MCF 10A (cell line): ENCODE measurements at regions of chr11 and their contacts with region 1.

Region 1: DNA sequence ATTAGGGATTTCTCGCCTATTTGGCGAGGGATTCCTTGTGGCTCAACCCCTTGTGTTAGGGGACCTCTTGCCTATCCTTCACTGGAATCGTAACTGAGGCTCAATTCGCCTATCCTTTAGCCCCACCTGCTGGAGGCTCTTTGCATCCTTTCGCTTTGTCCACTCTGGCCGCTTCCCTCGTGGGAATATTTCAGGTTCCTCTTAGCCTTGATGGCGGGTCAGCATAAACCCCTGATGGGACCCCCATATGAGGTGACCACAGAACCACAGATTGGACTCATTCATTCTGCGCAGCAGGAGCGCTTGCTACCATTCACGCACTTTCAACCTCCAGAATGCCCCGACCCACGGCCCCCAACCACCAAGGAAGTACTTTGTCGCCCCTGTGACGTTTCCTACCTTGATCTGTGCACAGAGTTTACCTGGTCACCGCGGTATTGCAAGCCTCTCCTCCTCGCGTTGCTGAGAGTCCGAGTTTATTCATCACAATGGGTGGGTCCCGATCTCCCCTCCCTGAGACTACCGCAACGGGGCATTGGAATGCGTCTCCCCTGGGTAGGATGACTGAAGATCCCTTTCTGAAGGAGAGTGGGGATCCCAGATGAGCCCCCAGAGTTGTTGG is at the start of gene OR52N2:
- DNase-seq: peak; percentile 74
- H3K4me3 Mint-ChIP-seq: peak within 1 kb of the TSS; percentile 74
- H3K27ac Mint-ChIP-seq: no peak within 1 kb of the TSS
- H3K4me1 Mint-ChIP-seq: peaks cover 13% of the 10 kb centered on the region
- H3K27me3 Mint-ChIP-seq: peaks cover 79% of the 10 kb centered on the region
- CTCF ChIP-seq: peak; percentile 72
- total RNA-seq, gene OR52N2: not detected in 2 replicates

Region 2: DNA sequence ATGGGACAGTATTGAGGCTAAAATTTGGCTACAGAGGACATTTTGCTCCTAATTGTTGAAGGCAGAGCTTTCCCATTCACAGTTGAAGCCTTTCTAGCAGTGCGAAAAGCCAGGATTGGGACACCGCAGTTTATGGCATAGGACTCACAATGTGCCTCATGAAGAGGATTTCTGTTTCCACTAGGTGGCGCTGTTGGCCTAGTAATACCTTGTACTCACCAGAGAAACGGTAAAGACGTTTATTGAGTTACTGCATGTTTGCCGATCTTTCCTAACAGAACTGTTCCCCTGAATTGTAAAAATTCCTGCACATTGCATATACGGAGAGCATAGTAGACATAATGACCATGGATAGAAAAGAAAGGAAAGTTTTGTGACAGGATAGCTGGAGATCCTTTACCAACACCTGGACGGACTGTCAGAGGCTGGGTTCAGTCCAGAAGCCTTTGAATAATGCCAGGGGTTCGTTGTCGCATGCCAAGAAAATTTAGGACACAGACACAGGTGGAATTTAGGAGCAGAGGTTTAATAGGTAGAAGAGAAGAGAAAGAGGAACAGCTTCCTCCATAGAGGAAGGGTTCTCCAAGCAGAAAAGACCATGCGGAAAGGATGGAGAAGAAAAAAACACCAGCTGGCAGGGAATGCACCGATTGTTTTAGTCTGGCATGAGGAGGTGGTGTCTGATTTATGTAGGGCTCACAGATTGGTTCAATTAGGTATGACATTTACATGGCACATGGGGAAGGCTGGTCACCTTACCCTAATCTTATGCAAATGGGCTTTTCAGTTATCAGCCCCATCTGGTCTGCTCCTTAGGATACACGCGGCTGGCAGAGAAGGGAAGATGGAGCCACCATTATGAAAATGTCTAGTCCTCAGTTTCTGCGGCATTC is 1182.2 kb before region 1 on chr11:
- CTCF ChIA-PET with region 1: no interaction called
- POLR2A ChIA-PET with region 1: no interaction called
- intact Hi-C with region 1: loop called (anchors 5 kb)
- DNase-seq: peak; percentile 88
- H3K4me3 Mint-ChIP-seq: no peak overlapping the region
- H3K27ac Mint-ChIP-seq: no peak overlapping the region
- H3K4me1 Mint-ChIP-seq: no peaks in the 10 kb centered on the region
- H3K27me3 Mint-ChIP-seq: peaks cover 45% of the 10 kb centered on the region
- CTCF ChIP-seq: peak; percentile 73

Region 3: GRCh38 chr11:5204787-5205186 is 603.8 kb before region 1 on chr11:
- CTCF ChIA-PET with region 1: interaction called, 4 read pairs
- POLR2A ChIA-PET with region 1: no interaction called
- intact Hi-C with region 1: loop called (anchors 2 kb)
- DNase-seq: peak; percentile 63
- H3K4me3 Mint-ChIP-seq: no peak overlapping the region
- H3K27ac Mint-ChIP-seq: no peak overlapping the region
- H3K4me1 Mint-ChIP-seq: peaks cover 5% of the 10 kb centered on the region
- H3K27me3 Mint-ChIP-seq: peaks cover 39% of the 10 kb centered on the region
- CTCF ChIP-seq: peak; percentile 58

Region 4: GRCh38 chr11:5380740-5381342 is 427.8 kb before region 1 on chr11:
- CTCF ChIA-PET with region 1: interaction called, 3 read pairs
- POLR2A ChIA-PET with region 1: no interaction called
- intact Hi-C with region 1: loop called (anchors 1 kb)
- DNase-seq: peak; percentile 74
- H3K4me3 Mint-ChIP-seq: no peak overlapping the region
- H3K27ac Mint-ChIP-seq: no peak overlapping the region
- H3K4me1 Mint-ChIP-seq: no peaks in the 10 kb centered on the region
- H3K27me3 Mint-ChIP-seq: peaks cover 23% of the 10 kb centered on the region
- CTCF ChIP-seq: peak; percentile 78

Region 5: GRCh38 chr11:5605849-5606248 is 202.8 kb before region 1 on chr11:
- CTCF ChIA-PET with region 1: interaction called, 4 read pairs
- POLR2A ChIA-PET with region 1: no interaction called
- intact Hi-C with region 1: loop called (anchors 1 kb)
- DNase-seq: peak; percentile 87
- H3K4me3 Mint-ChIP-seq: no peak overlapping the region
- H3K27ac Mint-ChIP-seq: no peak overlapping the region
- H3K4me1 Mint-ChIP-seq: peaks cover 16% of the 10 kb centered on the region
- H3K27me3 Mint-ChIP-seq: no peaks in the 10 kb centered on the region
- CTCF ChIP-seq: peak; percentile 16